CD4-positive, alpha-beta T cell (primary cell): ENCODE measurements at regions of chr1 and their contacts with region 1.

Region 1: GRCh38 chr1:26279456-26280332 is at the start of gene SH3BGRL3:
- DNase-seq: peak; percentile 67 to 93 (median 86)
- ATAC-seq: peak; percentile 63
- H3K4me3 ChIP-seq: peak within 1 kb of the TSS; percentile 72
- H3K4me3 Mint-ChIP-seq: peak within 1 kb of the TSS; percentile 92
- H3K27ac ChIP-seq: peak within 1 kb of the TSS; percentile 84 to 91
- H3K27ac Mint-ChIP-seq: peak within 1 kb of the TSS; percentile 95
- H3K4me1 ChIP-seq: peaks cover 90% of the 10 kb centered on the region
- H3K4me1 Mint-ChIP-seq: peaks cover 83% of the 10 kb centered on the region
- H3K27me3 ChIP-seq: no peaks in the 10 kb centered on the region
- H3K27me3 Mint-ChIP-seq: no peaks in the 10 kb centered on the region
- CTCF ChIP-seq: no peak
- total RNA-seq, gene SH3BGRL3: 178 to 193 TPM

Region 2: DNA sequence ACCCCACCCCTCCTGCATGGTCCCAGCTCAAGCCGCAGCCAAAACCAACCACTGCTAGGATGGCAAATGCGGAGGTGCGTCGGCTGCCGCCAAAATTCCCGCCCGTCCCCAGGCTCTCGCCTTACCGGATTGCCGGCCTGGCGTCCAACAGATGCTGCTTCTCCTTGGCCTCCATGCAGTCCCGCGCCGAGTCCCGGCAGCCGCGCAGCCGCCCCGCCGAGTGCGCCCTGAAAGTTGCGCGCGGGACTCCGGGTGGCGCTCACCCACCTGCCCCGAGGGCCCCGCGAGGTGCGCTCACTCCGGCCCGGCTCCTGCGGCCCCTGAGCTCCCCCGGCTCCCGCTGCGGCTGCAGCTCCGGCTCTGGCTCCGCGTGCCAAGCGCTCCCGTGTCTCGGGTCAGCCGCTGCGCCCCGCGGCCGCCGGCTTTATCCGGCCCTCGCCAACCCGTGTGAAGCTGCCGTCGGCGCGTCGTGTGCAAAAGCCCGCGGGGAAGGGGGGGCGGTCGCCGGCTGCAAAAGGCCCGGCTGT is 233.9 kb before region 1 on chr1 and contains the start of gene SLC30A2:
- CTCF ChIA-PET with region 1: no interaction called
- POLR2A ChIA-PET with region 1: no interaction called
- intact Hi-C with region 1: no loop called
- DNase-seq: no peak
- ATAC-seq: no peak
- H3K4me3 ChIP-seq: no peak within 1 kb of the TSS
- H3K4me3 Mint-ChIP-seq: no peak within 1 kb of the TSS
- H3K27ac ChIP-seq: no peak within 1 kb of the TSS
- H3K27ac Mint-ChIP-seq: no peak within 1 kb of the TSS
- H3K4me1 ChIP-seq: peaks cover 2% of the 10 kb centered on the region
- H3K4me1 Mint-ChIP-seq: peaks cover 6% of the 10 kb centered on the region
- H3K27me3 ChIP-seq: peaks cover 50 to 59% of the 10 kb centered on the region in 2 experiments
- H3K27me3 Mint-ChIP-seq: peaks cover 75% of the 10 kb centered on the region
- CTCF ChIP-seq: no peak
- total RNA-seq, gene SLC30A2: not detected

Region 3: GRCh38 chr1:26210147-26210870 is 69.4 kb before region 1 on chr1:
- CTCF ChIA-PET with region 1: no interaction called
- POLR2A ChIA-PET with region 1: no interaction called
- intact Hi-C with region 1: no loop called
- DNase-seq: no peak
- ATAC-seq: no peak
- H3K4me3 ChIP-seq: no peak overlapping the region
- H3K4me3 Mint-ChIP-seq: no peak overlapping the region
- H3K27ac ChIP-seq: no peak overlapping the region
- H3K27ac Mint-ChIP-seq: no peak overlapping the region
- H3K4me1 ChIP-seq: no peaks in the 10 kb centered on the region
- H3K4me1 Mint-ChIP-seq: no peaks in the 10 kb centered on the region
- H3K27me3 ChIP-seq: no peaks in the 10 kb centered on the region
- H3K27me3 Mint-ChIP-seq: no peaks in the 10 kb centered on the region
- CTCF ChIP-seq: no peak

Region 4: DNA sequence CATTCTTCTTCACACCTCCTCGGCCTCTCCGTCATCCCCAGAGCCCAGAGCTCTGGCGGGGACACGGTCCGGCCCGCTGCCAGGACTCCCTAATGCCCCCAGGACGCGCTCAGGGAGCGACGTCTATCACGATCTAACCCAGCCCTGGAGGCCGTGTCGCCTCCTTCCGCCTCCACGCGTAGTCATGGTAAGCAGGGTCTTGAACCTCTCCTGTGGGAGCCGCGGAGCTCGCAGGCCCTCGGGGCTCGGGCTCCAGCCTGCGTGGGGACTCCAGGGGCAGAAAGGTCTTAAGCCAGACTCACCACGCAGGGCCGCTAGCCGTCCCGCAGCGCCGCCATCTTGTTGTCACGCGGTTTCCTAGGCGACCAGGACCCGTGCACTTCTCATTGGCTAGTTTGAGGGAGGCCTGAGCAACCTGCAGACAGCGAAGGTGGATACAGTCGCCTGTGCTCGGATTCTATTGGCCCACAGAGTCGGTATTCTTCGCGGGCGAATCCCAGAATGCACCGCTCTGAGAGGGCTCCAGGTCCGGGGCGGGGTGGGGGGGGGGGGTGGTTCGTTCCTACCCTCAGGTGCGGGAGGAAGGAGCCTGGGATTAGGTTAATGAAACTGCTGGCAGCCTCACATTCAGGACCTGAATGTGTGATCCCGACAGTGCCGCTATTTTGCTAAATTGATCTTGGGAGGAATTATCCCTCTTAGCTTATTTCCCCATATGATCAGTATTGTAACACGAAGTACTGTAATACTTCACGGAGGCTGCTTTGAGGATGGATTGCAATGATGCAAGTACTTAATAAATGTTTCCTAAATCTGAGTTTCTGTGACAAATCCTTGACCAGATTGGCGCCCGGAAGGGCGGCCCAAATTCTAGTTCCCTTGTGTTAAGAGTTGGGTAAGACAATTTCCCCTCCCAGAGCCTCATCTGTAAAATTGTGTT is 26.9 kb after region 1 on chr1 and contains the start of gene UBXN11:
- CTCF ChIA-PET with region 1: interaction called, 29 read pairs
- POLR2A ChIA-PET with region 1: interaction called, 270 read pairs
- intact Hi-C with region 1: loop called in 1 of 2 experiments (anchors 1 kb)
- DNase-seq: peak; percentile 81 to 97 (median 88)
- ATAC-seq: peak; percentile 94
- H3K4me3 ChIP-seq: peak within 1 kb of the TSS; percentile 77
- H3K4me3 Mint-ChIP-seq: peak within 1 kb of the TSS; percentile 94
- H3K27ac ChIP-seq: peak within 1 kb of the TSS; percentile 65 to 67
- H3K27ac Mint-ChIP-seq: peak within 1 kb of the TSS; percentile 87
- H3K4me1 ChIP-seq: peaks cover 41% of the 10 kb centered on the region
- H3K4me1 Mint-ChIP-seq: peaks cover 34% of the 10 kb centered on the region
- H3K27me3 ChIP-seq: no peaks in the 10 kb centered on the region
- H3K27me3 Mint-ChIP-seq: no peaks in the 10 kb centered on the region
- CTCF ChIP-seq: no peak
- total RNA-seq, gene UBXN11: 39.3 to 42.3 TPM

Region 5: GRCh38 chr1:26358411-26359384 is 79.0 kb after region 1 on chr1:
- CTCF ChIA-PET with region 1: interaction called, 7 read pairs
- POLR2A ChIA-PET with region 1: interaction called, 12 read pairs
- intact Hi-C with region 1: loop called in 1 of 2 experiments (anchors 1 kb)
- DNase-seq: peak; percentile 52 to 93 (median 67)
- ATAC-seq: peak; percentile 89
- H3K4me3 ChIP-seq: peak overlapping the region; percentile 2
- H3K4me3 Mint-ChIP-seq: peak overlapping the region; percentile 52
- H3K27ac ChIP-seq: no peak overlapping the region
- H3K27ac Mint-ChIP-seq: peak overlapping the region; percentile 68
- H3K4me1 ChIP-seq: peaks cover 56% of the 10 kb centered on the region
- H3K4me1 Mint-ChIP-seq: peaks cover 42% of the 10 kb centered on the region
- H3K27me3 ChIP-seq: peaks cover 0 to 23% of the 10 kb centered on the region in 2 experiments
- H3K27me3 Mint-ChIP-seq: peaks cover 27% of the 10 kb centered on the region
- CTCF ChIP-seq: no peak

Region 6: GRCh38 chr1:26363549-26364448 is 84.1 kb after region 1 on chr1:
- CTCF ChIA-PET with region 1: interaction called, 7 read pairs
- POLR2A ChIA-PET with region 1: interaction called, 12 read pairs
- intact Hi-C with region 1: loop called in 1 of 2 experiments (anchors 1 kb)
- DNase-seq: peak; percentile 74 to 96 (median 84)
- ATAC-seq: peak; percentile 61
- H3K4me3 ChIP-seq: no peak overlapping the region
- H3K4me3 Mint-ChIP-seq: peak overlapping the region; percentile 69
- H3K27ac ChIP-seq: no peak overlapping the region
- H3K27ac Mint-ChIP-seq: no peak overlapping the region
- H3K4me1 ChIP-seq: peaks cover 79% of the 10 kb centered on the region
- H3K4me1 Mint-ChIP-seq: peaks cover 56% of the 10 kb centered on the region
- H3K27me3 ChIP-seq: peaks cover 0 to 21% of the 10 kb centered on the region in 2 experiments
- H3K27me3 Mint-ChIP-seq: peaks cover 28% of the 10 kb centered on the region
- CTCF ChIP-seq: peak; percentile 98

Region 7: GRCh38 chr1:26391450-26391849 is 111.8 kb after region 1 on chr1:
- CTCF ChIA-PET with region 1: interaction called, 15 read pairs
- POLR2A ChIA-PET with region 1: interaction called, 6 read pairs
- intact Hi-C with region 1: loop called in 1 of 2 experiments (anchors 1 kb)
- DNase-seq: peak in 12 of 14 experiments; percentile 21 to 80 (median 36)
- ATAC-seq: peak; percentile 69
- H3K4me3 ChIP-seq: no peak overlapping the region
- H3K4me3 Mint-ChIP-seq: no peak overlapping the region
- H3K27ac ChIP-seq: no peak overlapping the region
- H3K27ac Mint-ChIP-seq: no peak overlapping the region
- H3K4me1 ChIP-seq: peaks cover 41% of the 10 kb centered on the region
- H3K4me1 Mint-ChIP-seq: peaks cover 20% of the 10 kb centered on the region
- H3K27me3 ChIP-seq: no peaks in the 10 kb centered on the region
- H3K27me3 Mint-ChIP-seq: no peaks in the 10 kb centered on the region
- CTCF ChIP-seq: peak; percentile 68

Region 8: DNA sequence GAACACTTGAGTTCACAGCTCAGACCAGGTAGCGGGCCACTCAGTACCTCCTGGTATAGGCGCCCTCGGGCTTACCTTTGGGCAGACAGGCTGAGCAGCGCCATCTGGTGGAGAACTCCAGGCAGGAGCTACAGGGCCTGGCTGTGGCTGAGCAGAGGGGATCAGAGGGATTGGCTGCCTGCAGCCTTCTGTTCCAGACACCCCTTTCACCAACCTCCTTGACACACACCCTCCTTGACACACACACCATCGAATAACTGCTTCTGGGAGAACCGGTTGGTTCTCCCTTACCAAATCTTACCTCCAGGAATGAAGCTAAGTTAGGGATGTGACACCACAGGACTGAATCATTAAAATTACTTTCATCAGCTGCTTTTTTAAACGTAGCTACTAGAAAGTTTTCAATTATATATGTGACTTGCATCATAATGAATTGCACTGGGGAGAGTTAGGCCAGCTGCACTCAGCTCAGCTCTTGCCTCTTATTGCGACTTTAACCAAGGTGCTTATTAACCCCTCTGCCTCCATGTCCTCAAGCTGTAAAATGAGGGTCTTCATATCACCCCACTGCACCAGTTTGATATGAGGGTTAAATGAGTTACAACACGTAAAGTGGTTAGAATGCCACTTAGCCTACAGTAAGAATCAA is 137.5 kb after region 1 on chr1:
- CTCF ChIA-PET with region 1: interaction called, 11 read pairs
- POLR2A ChIA-PET with region 1: interaction called, 7 read pairs
- intact Hi-C with region 1: loop called (anchors 1 to 2 kb)
- DNase-seq: peak; percentile 78 to 91 (median 82)
- ATAC-seq: peak; percentile 100
- H3K4me3 ChIP-seq: no peak overlapping the region
- H3K4me3 Mint-ChIP-seq: no peak overlapping the region
- H3K27ac ChIP-seq: no peak overlapping the region
- H3K27ac Mint-ChIP-seq: no peak overlapping the region
- H3K4me1 ChIP-seq: no peaks in the 10 kb centered on the region
- H3K4me1 Mint-ChIP-seq: no peaks in the 10 kb centered on the region
- H3K27me3 ChIP-seq: peaks cover 19 to 27% of the 10 kb centered on the region in 2 experiments
- H3K27me3 Mint-ChIP-seq: peaks cover 40% of the 10 kb centered on the region
- CTCF ChIP-seq: peak; percentile 95

Region 9: GRCh38 chr1:26472901-26473845 is 193.5 kb after region 1 on chr1:
- CTCF ChIA-PET with region 1: interaction called, 3 read pairs
- POLR2A ChIA-PET with region 1: no interaction called
- intact Hi-C with region 1: loop called in 1 of 2 experiments (anchors 5 kb)
- DNase-seq: peak; percentile 93 to 99 (median 96)
- ATAC-seq: peak; percentile 77
- H3K4me3 ChIP-seq: peak overlapping the region; percentile 78
- H3K4me3 Mint-ChIP-seq: peak overlapping the region; percentile 89
- H3K27ac ChIP-seq: peak overlapping the region; percentile 90 to 95
- H3K27ac Mint-ChIP-seq: peak overlapping the region; percentile 99
- H3K4me1 ChIP-seq: peaks cover 36% of the 10 kb centered on the region
- H3K4me1 Mint-ChIP-seq: peaks cover 53% of the 10 kb centered on the region
- H3K27me3 ChIP-seq: no peaks in the 10 kb centered on the region
- H3K27me3 Mint-ChIP-seq: no peaks in the 10 kb centered on the region
- CTCF ChIP-seq: no peak